ENCODE measurements at regions of chr11 and their contacts with region 1.

Region 1: DNA sequence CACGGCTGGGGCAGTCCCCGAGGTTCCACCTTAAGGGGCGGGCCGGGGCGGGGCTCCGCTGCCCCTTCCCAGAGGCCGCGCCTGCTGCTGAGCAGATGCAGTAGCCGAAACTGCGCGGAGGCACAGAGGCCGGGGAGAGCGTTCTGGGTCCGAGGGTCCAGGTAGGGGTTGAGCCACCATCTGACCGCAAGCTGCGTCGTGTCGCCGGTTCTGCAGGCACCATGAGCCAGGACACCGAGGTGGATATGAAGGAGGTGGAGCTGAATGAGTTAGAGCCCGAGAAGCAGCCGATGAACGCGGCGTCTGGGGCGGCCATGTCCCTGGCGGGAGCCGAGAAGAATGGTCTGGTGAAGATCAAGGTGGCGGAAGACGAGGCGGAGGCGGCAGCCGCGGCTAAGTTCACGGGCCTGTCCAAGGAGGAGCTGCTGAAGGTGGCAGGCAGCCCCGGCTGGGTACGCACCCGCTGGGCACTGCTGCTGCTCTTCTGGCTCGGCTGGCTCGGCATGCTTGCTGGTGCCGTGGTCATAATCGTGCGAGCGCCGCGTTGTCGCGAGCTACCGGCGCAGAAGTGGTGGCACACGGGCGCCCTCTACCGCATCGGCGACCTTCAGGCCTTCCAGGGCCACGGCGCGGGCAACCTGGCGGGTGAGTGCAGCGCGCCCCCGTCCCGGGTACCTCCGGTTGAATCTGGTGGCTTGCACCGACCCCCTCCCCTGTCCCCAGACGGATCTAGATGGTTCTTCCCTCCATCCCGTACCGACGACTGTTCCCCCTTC is at the start of gene SLC3A2:
- DNase-seq: peak; percentile 85 to 89 (median 88)
- H3K4me3 ChIP-seq: peak within 1 kb of the TSS; percentile 96 to 98
- H3K4me3 Mint-ChIP-seq: peak within 1 kb of the TSS; percentile 93 to 100 (median 100)
- H3K27ac ChIP-seq: peak within 1 kb of the TSS; percentile 93
- H3K27ac Mint-ChIP-seq: peak within 1 kb of the TSS; percentile 93 to 100 (median 99)
- H3K4me1 ChIP-seq: peaks cover 52% of the 10 kb centered on the region
- H3K4me1 Mint-ChIP-seq: peaks cover 26 to 60% (median 41%) of the 10 kb centered on the region in 4 donors
- H3K27me3 ChIP-seq: no peaks in the 10 kb centered on the region
- H3K27me3 Mint-ChIP-seq: no peaks in the 10 kb centered on the region
- total RNA-seq, gene SLC3A2: 205 to 215 TPM

Region 2: DNA sequence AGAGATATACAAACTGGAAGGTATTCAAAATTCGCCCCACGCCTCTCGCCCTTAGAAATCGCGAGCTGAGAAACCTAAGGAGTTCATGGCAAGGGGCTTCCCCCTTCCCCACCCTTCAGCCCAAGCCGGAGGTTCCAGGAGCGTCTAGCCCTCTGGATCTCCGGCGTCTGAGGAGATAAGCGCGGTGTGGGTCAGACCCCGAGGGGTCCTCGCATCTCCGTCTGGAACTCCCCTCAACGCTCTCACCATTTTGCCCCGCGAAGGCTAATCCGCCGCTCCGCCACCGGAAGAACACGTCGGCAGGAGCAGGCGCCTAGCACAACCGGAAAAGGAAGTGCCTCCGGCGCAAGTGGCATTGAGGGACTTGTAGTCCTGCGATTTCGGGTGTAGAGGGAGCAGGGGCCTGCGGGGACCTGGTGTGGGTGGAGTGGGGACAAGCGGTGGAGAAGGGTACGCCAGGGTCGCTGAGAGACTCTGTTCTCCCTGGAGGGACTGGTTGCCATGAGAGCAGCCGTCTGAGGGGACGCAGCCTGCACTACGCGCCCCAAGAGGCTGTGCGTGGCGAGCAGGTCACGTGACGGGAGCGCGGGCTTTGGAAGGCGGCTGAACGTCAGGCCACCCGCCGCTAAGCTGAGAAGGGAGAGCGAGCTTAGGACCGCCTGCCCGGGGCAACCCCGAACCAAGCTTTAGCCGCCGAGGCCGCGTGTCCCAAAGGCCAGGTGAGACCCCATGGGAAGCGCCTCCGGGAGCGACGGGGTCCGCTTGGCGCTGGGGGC is 1088.5 kb before region 1 on chr11 and contains the starts of genes FEN1 and TMEM258:
- CTCF ChIA-PET with region 1: no interaction called
- POLR2A ChIA-PET with region 1: no interaction called
- intact Hi-C with region 1: loop called (anchors 5 kb)
- DNase-seq: peak; percentile 87 to 92 (median 91)
- H3K4me3 ChIP-seq: peak within 1 kb of the TSS; percentile 95 to 96
- H3K4me3 Mint-ChIP-seq: peak within 1 kb of the TSS; percentile 89 to 99 (median 94)
- H3K27ac ChIP-seq: peak within 1 kb of the TSS; percentile 98
- H3K27ac Mint-ChIP-seq: peak within 1 kb of the TSS; percentile 93 to 100 (median 99)
- H3K4me1 ChIP-seq: peaks cover 21% of the 10 kb centered on the region
- H3K4me1 Mint-ChIP-seq: peaks cover 12 to 56% (median 31%) of the 10 kb centered on the region in 4 donors
- H3K27me3 ChIP-seq: no peaks in the 10 kb centered on the region
- H3K27me3 Mint-ChIP-seq: no peaks in the 10 kb centered on the region
- total RNA-seq, gene FEN1: 7.4 to 8.0 TPM
- total RNA-seq, gene TMEM258: 113 to 117 TPM

Region 3: GRCh38 chr11:62601394-62602140 is 279.4 kb before region 1 on chr11 and contains the start of gene MTA2:
- CTCF ChIA-PET with region 1: no interaction called
- POLR2A ChIA-PET with region 1: interaction called, 11 read pairs
- intact Hi-C with region 1: no loop called
- DNase-seq: peak; percentile 99 to 100 (median 100)
- H3K4me3 ChIP-seq: peak within 1 kb of the TSS; percentile 71 to 82
- H3K4me3 Mint-ChIP-seq: peak within 1 kb of the TSS; percentile 91 to 99 (median 96)
- H3K27ac ChIP-seq: peak within 1 kb of the TSS; percentile 91
- H3K27ac Mint-ChIP-seq: peak within 1 kb of the TSS; percentile 90 to 99 (median 98)
- H3K4me1 ChIP-seq: peaks cover 35% of the 10 kb centered on the region
- H3K4me1 Mint-ChIP-seq: peaks cover 33 to 60% (median 46%) of the 10 kb centered on the region in 4 donors
- H3K27me3 ChIP-seq: no peaks in the 10 kb centered on the region
- H3K27me3 Mint-ChIP-seq: no peaks in the 10 kb centered on the region
- total RNA-seq, gene MTA2: 207 to 210 TPM

Region 4: GRCh38 chr11:62612366-62613290 is 268.4 kb before region 1 on chr11 and contains the starts of genes EML3 and ROM1:
- CTCF ChIA-PET with region 1: no interaction called
- POLR2A ChIA-PET with region 1: no interaction called
- intact Hi-C with region 1: no loop called
- DNase-seq: peak; percentile 85 to 88 (median 86)
- H3K4me3 ChIP-seq: peak within 1 kb of the TSS; percentile 73 to 93
- H3K4me3 Mint-ChIP-seq: peak within 1 kb of the TSS; percentile 89 to 100 (median 96)
- H3K27ac ChIP-seq: peak within 1 kb of the TSS; percentile 90
- H3K27ac Mint-ChIP-seq: peak within 1 kb of the TSS; percentile 94 to 98 (median 96)
- H3K4me1 ChIP-seq: peaks cover 59% of the 10 kb centered on the region
- H3K4me1 Mint-ChIP-seq: peaks cover 15 to 53% (median 38%) of the 10 kb centered on the region in 4 donors
- H3K27me3 ChIP-seq: no peaks in the 10 kb centered on the region
- H3K27me3 Mint-ChIP-seq: no peaks in the 10 kb centered on the region
- total RNA-seq, gene EML3: 192 to 201 TPM
- total RNA-seq, gene ROM1: 1.6 to 1.9 TPM

Region 5: DNA sequence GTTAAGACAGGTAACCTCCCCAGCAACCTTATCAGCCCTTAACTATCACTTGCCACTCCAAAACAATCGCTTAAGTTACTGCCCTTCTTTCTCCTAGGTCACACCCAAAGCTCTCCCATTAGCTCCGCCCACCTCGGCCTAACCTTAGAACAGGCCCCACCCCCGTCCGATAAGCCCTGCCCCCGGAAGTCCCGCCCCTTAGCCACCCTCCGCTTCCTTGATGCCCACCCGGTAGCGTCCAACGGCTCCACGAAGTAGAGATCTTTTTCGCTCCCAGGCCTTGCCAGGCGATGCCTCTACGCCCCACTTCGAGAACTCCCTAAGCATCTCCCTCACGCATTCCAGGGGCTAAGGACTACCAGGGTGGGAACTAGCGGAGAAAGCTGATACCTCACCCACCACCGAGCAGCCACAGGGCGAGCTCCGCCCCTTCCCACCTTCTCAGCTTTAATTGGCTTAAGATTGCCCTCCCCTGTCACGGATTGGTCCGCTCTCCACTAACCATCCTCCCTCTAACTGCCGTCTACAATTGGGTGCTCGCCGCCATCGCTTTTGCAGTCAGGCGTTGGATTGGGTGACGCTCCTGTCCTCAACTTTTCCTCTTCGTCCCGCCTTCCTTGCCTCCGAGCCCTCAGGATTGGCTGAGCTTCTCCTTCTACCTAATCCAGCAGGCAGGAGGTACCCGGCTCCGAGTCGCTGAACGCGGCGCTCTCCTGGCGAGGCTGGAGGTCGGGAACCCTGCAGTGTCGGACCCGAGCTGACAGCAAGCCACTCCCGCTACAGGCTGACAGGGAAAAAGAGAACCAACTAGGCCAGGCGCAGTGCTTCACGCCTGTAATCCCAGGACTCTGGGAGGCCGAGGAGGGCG is 127.0 kb before region 1 on chr11 and contains the start of gene ZBTB3:
- CTCF ChIA-PET with region 1: interaction called, 3 read pairs
- POLR2A ChIA-PET with region 1: interaction called, 25 read pairs
- intact Hi-C with region 1: no loop called
- DNase-seq: peak; percentile 99
- H3K4me3 ChIP-seq: peak within 1 kb of the TSS; percentile 68 to 98
- H3K4me3 Mint-ChIP-seq: peak within 1 kb of the TSS; percentile 96 to 99 (median 98)
- H3K27ac ChIP-seq: peak within 1 kb of the TSS; percentile 90
- H3K27ac Mint-ChIP-seq: peak within 1 kb of the TSS; percentile 94 to 100 (median 99)
- H3K4me1 ChIP-seq: peaks cover 45% of the 10 kb centered on the region
- H3K4me1 Mint-ChIP-seq: peaks cover 15 to 41% (median 25%) of the 10 kb centered on the region in 4 donors
- H3K27me3 ChIP-seq: no peaks in the 10 kb centered on the region
- H3K27me3 Mint-ChIP-seq: no peaks in the 10 kb centered on the region
- total RNA-seq, gene ZBTB3: 27.2 to 27.9 TPM

Region 6: DNA sequence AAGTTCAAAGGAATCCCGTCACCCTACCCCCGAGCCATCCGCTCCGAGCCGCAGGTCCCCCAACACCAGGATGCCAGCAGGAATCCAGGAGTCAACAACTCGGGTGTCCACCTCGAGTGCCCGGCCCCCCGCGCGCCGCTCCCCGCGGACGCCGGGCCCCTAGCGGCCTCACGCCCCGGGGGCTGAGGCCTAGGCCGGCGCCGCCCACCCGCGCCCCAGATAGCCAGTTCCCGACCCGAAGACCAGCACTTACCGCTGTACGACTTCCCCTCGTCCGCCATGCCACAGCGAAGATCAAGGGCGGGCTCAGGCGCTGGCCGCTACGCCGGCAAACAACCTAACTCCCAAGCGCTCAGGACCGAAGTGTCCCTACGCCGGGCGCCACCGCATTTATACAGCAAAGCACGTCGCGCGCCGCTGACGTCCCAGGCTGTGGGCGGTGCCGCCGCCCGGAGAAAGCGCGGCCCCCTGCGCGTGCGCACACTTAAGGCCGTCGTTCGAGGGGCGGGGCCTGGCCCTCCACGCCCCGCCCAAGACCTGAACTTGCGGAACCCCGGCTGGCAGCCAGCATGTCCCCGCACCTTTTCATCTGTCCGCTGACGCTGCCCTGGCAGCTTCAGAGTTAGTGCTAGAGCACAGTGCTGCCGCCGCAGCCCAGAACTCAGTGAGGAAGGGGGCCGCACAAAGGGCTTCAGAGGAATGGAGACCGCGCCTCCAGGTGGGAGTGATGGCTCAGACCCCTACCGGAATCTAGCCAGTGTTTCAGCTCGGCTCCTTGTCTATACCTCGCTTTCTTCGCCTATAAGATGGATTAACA is 75.7 kb before region 1 on chr11 and contains the start of gene NXF1:
- CTCF ChIA-PET with region 1: no interaction called
- POLR2A ChIA-PET with region 1: interaction called, 16 read pairs
- intact Hi-C with region 1: loop called (anchors 1 kb)
- DNase-seq: peak; percentile 90 to 98 (median 96)
- H3K4me3 ChIP-seq: peak within 1 kb of the TSS; percentile 87 to 93
- H3K4me3 Mint-ChIP-seq: peak within 1 kb of the TSS; percentile 97 to 100 (median 99)
- H3K27ac ChIP-seq: peak within 1 kb of the TSS; percentile 94
- H3K27ac Mint-ChIP-seq: peak within 1 kb of the TSS; percentile 97 to 100 (median 99)
- H3K4me1 ChIP-seq: peaks cover 22% of the 10 kb centered on the region
- H3K4me1 Mint-ChIP-seq: peaks cover 20 to 43% (median 31%) of the 10 kb centered on the region in 4 donors
- H3K27me3 ChIP-seq: no peaks in the 10 kb centered on the region
- H3K27me3 Mint-ChIP-seq: peaks cover 0 to 2% of the 10 kb centered on the region in 2 donors
- total RNA-seq, gene NXF1: 195 to 196 TPM

Region 7: DNA sequence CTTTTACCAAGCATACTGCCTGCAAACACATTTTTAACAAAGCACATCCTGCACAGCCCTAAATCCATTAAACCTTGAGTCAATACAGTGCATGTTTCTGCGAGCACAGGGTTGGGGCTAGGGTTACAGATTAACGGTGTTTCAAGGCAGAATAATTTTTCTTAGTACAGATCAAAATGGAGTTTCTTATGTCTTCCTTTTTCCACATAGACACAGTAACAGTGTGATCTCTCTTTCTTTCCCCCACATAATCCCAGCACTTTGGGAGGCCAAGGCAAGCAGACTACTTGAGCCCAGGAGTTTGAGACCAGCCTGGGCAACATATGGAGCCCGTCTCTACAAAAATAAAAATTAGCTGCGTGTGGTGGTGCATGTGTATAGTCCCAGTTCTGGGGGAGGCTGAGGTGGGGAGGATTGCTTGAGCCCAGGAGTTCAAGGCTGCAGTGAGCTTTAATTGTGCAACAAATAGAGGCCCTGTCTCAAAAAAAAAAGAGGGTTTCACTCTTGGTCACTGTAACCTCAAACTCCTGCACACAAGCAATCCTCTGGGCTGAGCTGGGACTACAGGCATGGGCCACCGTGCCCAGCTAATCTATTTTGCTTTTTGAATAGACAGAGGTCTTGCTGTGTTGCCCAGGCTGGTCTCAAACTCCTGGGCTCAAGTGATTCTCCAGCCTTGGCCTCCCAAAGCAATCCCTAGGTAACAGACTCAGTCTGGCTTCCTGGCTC is 20.0 kb before region 1 on chr11:
- CTCF ChIA-PET with region 1: interaction called, 22 read pairs
- POLR2A ChIA-PET with region 1: interaction called, 138 read pairs
- intact Hi-C with region 1: loop called (anchors 1 kb)
- DNase-seq: no peak
- H3K4me3 ChIP-seq: no peak overlapping the region
- H3K4me3 Mint-ChIP-seq: no peak overlapping the region
- H3K27ac ChIP-seq: no peak overlapping the region
- H3K27ac Mint-ChIP-seq: peak overlapping the region in 2 of 7 donors; percentile 37 to 72
- H3K4me1 ChIP-seq: peaks cover 23% of the 10 kb centered on the region
- H3K4me1 Mint-ChIP-seq: peaks cover 11 to 25% (median 18%) of the 10 kb centered on the region in 4 donors
- H3K27me3 ChIP-seq: no peaks in the 10 kb centered on the region
- H3K27me3 Mint-ChIP-seq: no peaks in the 10 kb centered on the region

Region 8: DNA sequence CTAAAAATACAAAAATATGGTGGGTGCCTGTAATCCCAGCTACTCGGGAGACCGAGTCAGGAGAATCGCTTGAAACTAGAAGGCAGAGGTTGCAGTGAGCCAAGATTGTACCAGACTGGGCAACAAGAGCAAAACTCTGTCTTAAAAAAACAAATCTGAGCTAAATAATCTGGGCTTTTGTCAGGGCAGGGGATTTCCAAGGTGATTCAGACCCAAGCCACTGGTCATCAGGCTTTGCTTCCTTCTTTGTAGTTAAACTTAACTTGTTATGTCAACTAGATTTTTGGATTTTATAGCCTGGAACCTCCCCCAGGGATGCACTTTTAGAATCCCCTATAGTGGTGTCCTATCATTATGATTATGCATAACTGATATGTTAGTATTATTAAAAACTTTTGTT is 161.6 kb after region 1 on chr11:
- CTCF ChIA-PET with region 1: no interaction called
- POLR2A ChIA-PET with region 1: no interaction called
- intact Hi-C with region 1: no loop called
- DNase-seq: no peak
- H3K4me3 ChIP-seq: no peak overlapping the region
- H3K4me3 Mint-ChIP-seq: no peak overlapping the region
- H3K27ac ChIP-seq: no peak overlapping the region
- H3K27ac Mint-ChIP-seq: no peak overlapping the region
- H3K4me1 ChIP-seq: no peaks in the 10 kb centered on the region
- H3K4me1 Mint-ChIP-seq: no peaks in the 10 kb centered on the region
- H3K27me3 ChIP-seq: no peaks in the 10 kb centered on the region
- H3K27me3 Mint-ChIP-seq: peaks cover 8 to 26% of the 10 kb centered on the region in 2 donors

Region 9: DNA sequence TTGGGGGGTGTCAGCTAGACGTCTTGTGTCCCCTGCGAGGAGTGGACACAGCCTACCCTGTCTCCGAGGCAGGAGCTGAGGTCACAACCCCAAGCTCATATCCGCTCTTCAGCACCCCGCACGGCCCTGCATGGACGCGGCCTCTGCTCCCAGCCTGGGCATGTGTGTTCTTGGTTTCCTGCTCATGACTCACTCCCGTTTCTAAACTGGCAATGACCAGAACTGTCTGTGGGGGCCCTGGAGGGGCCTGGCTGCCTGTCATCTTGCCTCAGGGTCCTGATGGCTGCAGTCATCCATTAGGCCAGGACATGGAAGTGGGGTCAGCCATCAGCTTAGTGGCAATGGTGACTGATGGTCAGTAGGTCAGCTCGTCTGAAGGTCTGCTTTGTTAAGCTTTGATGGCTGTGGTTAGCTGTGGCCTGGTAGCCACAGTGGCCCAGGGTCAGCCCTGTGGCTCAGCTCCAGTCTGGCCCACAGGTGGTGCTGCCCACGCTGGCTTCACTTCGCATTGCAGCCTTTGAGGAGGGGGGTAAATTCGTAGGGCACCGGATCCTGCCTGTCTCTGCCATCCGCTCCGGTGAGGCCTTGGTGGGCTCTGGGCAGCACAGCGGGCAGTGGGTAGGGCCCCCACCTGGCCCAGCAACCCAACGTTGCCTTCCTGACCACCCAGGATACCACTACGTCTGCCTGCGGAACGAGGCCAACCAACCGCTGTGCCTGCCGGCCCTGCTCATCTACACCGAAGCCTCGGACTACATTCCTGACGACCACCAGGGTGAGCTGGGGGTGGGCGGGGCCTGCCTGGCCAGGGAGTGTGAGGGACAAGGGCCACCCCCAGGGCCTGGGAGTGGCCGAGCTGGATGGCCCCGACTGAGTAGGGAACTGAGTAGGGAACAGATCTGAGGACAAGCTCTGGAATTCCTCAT is 1382.3 kb after region 1 on chr11:
- CTCF ChIA-PET with region 1: no interaction called
- POLR2A ChIA-PET with region 1: no interaction called
- intact Hi-C with region 1: no loop called
- DNase-seq: no peak
- H3K4me3 ChIP-seq: no peak overlapping the region
- H3K4me3 Mint-ChIP-seq: peak overlapping the region in 1 of 8 donors; percentile 45
- H3K27ac ChIP-seq: no peak overlapping the region
- H3K27ac Mint-ChIP-seq: peak overlapping the region in 1 of 7 donors; percentile 60
- H3K4me1 ChIP-seq: peaks cover 6% of the 10 kb centered on the region
- H3K4me1 Mint-ChIP-seq: peaks cover 2 to 14% (median 8%) of the 10 kb centered on the region in 4 donors
- H3K27me3 ChIP-seq: no peaks in the 10 kb centered on the region
- H3K27me3 Mint-ChIP-seq: no peaks in the 10 kb centered on the region